ENCODE measurements at regions of chr14 and their contacts with region 1.

Region 1: GRCh38 chr14:65095619-65096205 is 6.6 kb downstream of the MAX start:
- DNase-seq: no peak
- ATAC-seq: no peak
- H3K4me3 Mint-ChIP-seq: no peak overlapping the region
- H3K27ac Mint-ChIP-seq: peak overlapping the region; percentile 49
- H3K4me1 Mint-ChIP-seq: peaks cover 74% of the 10 kb centered on the region
- H3K27me3 Mint-ChIP-seq: no peaks in the 10 kb centered on the region

Region 2: GRCh38 chr14:64928239-64929013 is 167.3 kb before region 1 on chr14:
- CTCF ChIA-PET with region 1: no interaction called
- POLR2A ChIA-PET with region 1: no interaction called
- intact Hi-C with region 1: loop called in 1 of 2 experiments (anchors 5 kb)
- DNase-seq: no peak
- ATAC-seq: peak; percentile 81
- H3K4me3 Mint-ChIP-seq: no peak overlapping the region
- H3K27ac Mint-ChIP-seq: no peak overlapping the region
- H3K4me1 Mint-ChIP-seq: peaks cover 31% of the 10 kb centered on the region
- H3K27me3 Mint-ChIP-seq: no peaks in the 10 kb centered on the region